CD14-positive monocyte (primary cell): ENCODE measurements at regions of chr14 and their contacts with region 1.

Region 1: GRCh38 chr14:51889851-51890250 is 29.4 kb downstream of the GNG2 start:
- DNase-seq: no peak
- H3K4me3 ChIP-seq: no peak overlapping the region
- H3K4me3 Mint-ChIP-seq: no peak overlapping the region
- H3K27ac ChIP-seq: no peak overlapping the region
- H3K27ac Mint-ChIP-seq: no peak overlapping the region
- H3K4me1 ChIP-seq: peaks cover 8 to 13% of the 10 kb centered on the region in 2 donors
- H3K4me1 Mint-ChIP-seq: peaks cover 9% of the 10 kb centered on the region
- H3K27me3 ChIP-seq: no peaks in the 10 kb centered on the region
- H3K27me3 Mint-ChIP-seq: no peaks in the 10 kb centered on the region
- CTCF ChIP-seq: no peak

Region 2: GRCh38 chr14:51901475-51902024 is 11.7 kb after region 1 on chr14:
- intact Hi-C with region 1: loop called in 1 of 2 experiments (anchors 2 kb)
- DNase-seq: no peak
- H3K4me3 ChIP-seq: no peak overlapping the region
- H3K4me3 Mint-ChIP-seq: no peak overlapping the region
- H3K27ac ChIP-seq: no peak overlapping the region
- H3K27ac Mint-ChIP-seq: peak overlapping the region in 3 of 7 donors; percentile 5 to 22 (median 21)
- H3K4me1 ChIP-seq: peaks cover 6 to 7% of the 10 kb centered on the region in 2 donors
- H3K4me1 Mint-ChIP-seq: peaks cover 21% of the 10 kb centered on the region
- H3K27me3 ChIP-seq: no peaks in the 10 kb centered on the region
- H3K27me3 Mint-ChIP-seq: peaks cover 0 to 4% (median 0%) of the 10 kb centered on the region in 3 donors
- CTCF ChIP-seq: no peak